Calu3 (cell line): ENCODE measurements at regions of chr7 and their contacts with region 1.

Region 1: DNA sequence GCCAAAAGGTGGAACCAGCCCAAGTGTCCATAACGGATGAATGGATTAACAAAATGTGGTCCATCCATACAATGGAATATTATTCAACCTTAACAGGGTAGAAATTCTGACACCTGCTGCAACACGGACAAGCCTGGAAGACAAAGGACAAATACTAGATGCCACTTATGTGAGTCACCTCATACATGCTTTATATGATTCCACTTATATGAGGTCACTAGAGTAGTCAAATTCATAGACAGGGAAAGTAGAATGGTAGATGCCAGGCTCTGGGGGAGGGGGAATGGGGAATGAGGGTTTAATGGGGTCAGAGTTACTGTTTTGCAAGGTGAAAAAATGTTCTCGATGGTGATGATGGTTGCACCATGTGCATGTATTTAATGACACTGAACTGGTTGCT is 34.0 kb upstream of the CYTH3 start:
- DNase-seq: peak; percentile 89
- H3K4me3 Mint-ChIP-seq: no peak overlapping the region
- H3K27ac Mint-ChIP-seq: peak overlapping the region; percentile 81
- H3K4me1 Mint-ChIP-seq: peaks cover 38% of the 10 kb centered on the region
- H3K27me3 Mint-ChIP-seq: no peaks in the 10 kb centered on the region
- CTCF ChIP-seq: no peak

Region 2: GRCh38 chr7:6198689-6199595 is 107.5 kb before region 1 on chr7:
- CTCF ChIA-PET with region 1: no interaction called
- intact Hi-C with region 1: no loop called
- DNase-seq: no peak
- H3K4me3 Mint-ChIP-seq: no peak overlapping the region
- H3K27ac Mint-ChIP-seq: no peak overlapping the region
- H3K4me1 Mint-ChIP-seq: peaks cover 10% of the 10 kb centered on the region
- H3K27me3 Mint-ChIP-seq: no peaks in the 10 kb centered on the region
- CTCF ChIP-seq: no peak

Region 3: DNA sequence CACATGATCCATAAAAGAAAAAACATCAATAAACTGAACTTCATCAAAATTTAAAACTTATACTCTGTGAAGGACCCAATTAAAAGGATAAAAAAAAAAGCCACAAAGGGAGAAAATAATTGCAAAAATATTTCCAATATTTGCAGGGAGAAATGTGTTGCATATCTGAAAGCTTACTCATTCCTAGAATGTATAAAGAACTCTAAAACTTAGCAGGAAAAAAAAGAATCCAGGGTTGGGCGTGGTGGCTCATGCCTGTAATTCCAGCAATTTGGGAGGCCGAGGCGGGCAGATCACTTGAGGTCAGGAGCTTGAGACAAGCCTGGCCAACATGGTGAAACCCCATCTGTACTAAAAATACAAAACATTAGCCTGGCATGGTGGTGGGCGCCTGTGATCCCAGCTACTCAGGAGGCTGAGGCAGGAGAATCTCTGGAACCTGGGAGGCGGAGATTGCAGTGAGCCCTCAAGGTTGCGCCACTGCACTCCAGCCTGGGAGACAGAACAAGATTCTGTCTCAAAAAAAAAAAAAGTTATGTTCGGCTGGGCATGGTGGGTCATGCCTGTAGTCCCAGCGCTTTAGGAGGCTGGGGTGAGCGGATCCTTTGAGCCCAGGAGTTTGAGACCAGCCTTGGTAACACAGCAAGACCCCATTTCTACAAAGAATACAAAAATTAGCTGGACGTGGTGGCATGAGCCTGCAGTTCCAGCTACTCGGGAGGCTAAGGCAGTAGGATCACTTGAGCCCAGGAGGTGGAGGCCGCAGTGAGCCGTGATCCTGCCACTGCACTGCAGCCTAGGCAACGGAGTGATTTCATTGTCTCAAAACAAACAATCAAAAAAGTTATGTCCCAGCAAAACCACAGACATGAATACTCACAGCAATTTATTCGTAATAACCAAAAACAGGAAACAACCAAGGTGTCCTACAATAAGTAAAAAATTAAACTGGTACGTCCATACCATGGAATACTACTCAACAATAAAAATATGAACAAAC is 22.8 kb before region 1 on chr7:
- CTCF ChIA-PET with region 1: interaction called, 8 read pairs
- intact Hi-C with region 1: loop called (anchors 1 kb)
- DNase-seq: peak; percentile 84
- H3K4me3 Mint-ChIP-seq: peak overlapping the region; percentile 30
- H3K27ac Mint-ChIP-seq: peak overlapping the region; percentile 80
- H3K4me1 Mint-ChIP-seq: peaks cover 26% of the 10 kb centered on the region
- H3K27me3 Mint-ChIP-seq: no peaks in the 10 kb centered on the region
- CTCF ChIP-seq: no peak